ENCODE measurements at regions of chr2 and their contacts with region 1.

Region 1: DNA sequence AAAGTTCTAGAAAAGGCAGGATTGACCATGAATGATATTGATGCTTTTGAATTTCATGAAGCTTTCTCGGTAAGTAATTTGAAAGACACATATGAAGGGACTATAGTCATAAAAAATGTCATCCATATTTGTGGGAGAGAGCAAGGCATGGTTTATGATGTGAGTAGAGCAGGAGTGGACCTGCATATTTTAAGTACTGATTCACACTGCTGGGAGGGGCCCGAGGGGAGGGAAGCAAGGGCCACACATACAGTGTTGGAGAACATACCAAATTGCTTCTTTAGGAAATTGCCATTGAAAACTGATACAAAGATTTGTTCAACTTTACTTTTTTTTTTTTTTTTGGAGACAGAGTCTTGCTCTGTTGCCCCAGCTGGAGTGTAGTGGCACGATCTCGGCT is 39.4 kb downstream of the HADHB start:
- DNase-seq: no peak
- ATAC-seq: no peak
- H3K4me3 ChIP-seq: no peak overlapping the region
- H3K27ac ChIP-seq: no peak overlapping the region
- H3K4me1 ChIP-seq: no peaks in the 10 kb centered on the region
- H3K27me3 ChIP-seq: no peaks in the 10 kb centered on the region

Region 2: GRCh38 chr2:26136451-26136850 is 147.7 kb before region 1 on chr2:
- intact Hi-C with region 1: no loop called
- DNase-seq: no peak
- ATAC-seq: no peak
- H3K4me3 ChIP-seq: no peak overlapping the region
- H3K27ac ChIP-seq: no peak overlapping the region
- H3K4me1 ChIP-seq: no peaks in the 10 kb centered on the region
- H3K27me3 ChIP-seq: no peaks in the 10 kb centered on the region

Region 3: DNA sequence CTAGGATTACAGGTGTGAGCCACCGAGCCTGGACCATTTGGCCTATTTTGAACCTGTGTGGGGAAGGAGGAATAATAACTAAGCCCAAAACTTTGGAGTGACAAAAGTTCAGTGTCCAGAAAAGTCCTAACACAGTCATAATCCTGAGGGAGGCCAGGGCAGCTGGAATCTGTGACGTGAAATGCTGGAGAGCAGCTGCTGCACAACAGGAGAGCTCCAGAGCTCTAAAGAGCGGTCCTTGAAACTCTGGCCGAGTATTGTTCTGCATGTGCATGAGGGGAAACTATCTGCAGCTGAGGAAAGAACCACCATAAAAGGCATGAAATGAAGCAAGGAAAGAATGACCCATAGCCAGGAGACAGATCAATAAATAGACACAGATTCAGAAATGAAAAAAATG is 67.5 kb before region 1 on chr2:
- intact Hi-C with region 1: loop called in 2 of 4 experiments (anchors 10 kb)
- DNase-seq: no peak
- ATAC-seq: no peak
- H3K4me3 ChIP-seq: no peak overlapping the region
- H3K27ac ChIP-seq: no peak overlapping the region
- H3K4me1 ChIP-seq: no peaks in the 10 kb centered on the region
- H3K27me3 ChIP-seq: no peaks in the 10 kb centered on the region

Region 4: DNA sequence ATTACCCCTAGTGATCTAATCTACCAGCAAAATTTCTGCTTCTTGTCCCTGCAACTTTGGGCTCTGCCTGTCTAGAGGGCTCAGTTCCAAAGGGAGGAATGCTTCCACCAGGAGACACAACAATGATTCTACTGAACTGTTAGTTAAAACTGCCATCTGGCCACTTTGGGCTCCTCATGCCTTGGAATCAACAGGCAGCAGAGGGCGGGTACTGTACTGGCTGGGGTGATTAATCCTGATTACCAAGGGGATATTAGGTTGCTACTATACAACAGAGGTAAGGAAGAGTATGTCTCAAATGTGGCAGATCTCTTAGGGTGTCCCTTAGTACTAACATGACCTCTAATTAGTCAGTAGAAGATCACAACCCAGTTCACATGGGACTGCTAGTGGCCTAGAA is 61.1 kb before region 1 on chr2:
- intact Hi-C with region 1: loop called in 2 of 4 experiments (anchors 10 kb)
- DNase-seq: no peak
- ATAC-seq: no peak
- H3K4me3 ChIP-seq: no peak overlapping the region
- H3K27ac ChIP-seq: no peak overlapping the region
- H3K4me1 ChIP-seq: no peaks in the 10 kb centered on the region
- H3K27me3 ChIP-seq: no peaks in the 10 kb centered on the region

Region 5: DNA sequence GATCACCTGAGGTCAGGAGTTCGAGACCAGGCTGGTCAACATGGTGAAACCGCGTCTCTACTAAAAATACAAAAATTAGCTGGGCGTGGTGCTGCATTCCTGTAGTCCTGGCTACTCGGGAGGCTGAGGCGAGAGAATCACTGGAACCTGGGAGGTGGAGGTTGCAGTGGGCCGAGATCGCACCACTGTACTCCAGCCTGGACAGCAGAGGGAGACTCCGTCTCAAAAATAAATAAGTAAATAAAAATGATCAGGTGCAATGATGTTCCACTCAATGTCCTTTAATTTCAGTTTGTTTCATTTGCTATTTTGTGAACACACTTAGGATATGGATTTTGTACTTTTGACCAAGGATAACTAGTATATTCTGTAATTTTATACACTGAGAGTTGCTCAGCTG is 49.1 kb before region 1 on chr2:
- intact Hi-C with region 1: loop called in 1 of 4 experiments (anchors 10 kb)
- DNase-seq: no peak
- ATAC-seq: no peak
- H3K4me3 ChIP-seq: no peak overlapping the region
- H3K27ac ChIP-seq: no peak overlapping the region
- H3K4me1 ChIP-seq: peaks cover 3% of the 10 kb centered on the region
- H3K27me3 ChIP-seq: no peaks in the 10 kb centered on the region